Right ventricle myocardium superior (tissue), 1 donor: ENCODE measurements at regions of chr1 and their contacts with region 1.

Region 1: DNA sequence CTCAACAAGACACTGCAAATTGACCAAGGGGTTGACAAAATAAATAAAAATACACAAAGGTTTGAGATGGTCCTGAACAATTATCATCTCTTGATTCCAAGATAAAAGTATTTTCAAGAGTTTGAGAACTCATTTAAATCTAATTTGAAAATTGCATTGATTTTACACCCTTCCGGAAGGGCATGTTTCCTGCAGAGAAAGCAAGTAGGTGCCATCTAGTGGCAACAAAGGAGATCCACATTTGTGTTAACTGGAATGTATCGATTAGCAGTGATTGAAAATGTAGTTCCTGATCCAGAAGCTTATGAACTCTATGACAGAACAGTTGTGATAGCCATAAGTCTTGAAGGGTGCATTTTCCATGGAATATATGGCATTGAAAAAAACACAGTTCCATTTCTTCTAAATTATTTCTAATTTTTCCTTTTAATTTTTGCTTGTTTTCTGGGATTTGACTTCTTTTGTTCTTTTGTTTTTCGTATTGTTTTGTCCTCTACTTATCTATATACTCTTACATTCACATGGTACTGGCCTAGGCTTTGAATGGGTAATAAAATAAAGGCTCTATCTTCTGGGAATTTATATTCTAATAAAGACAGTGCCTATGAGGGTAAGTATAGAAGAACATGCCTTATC is 143.7 kb downstream of the DNM3 start:
- DNase-seq: no peak
- ATAC-seq: peak; percentile 85

Region 2: DNA sequence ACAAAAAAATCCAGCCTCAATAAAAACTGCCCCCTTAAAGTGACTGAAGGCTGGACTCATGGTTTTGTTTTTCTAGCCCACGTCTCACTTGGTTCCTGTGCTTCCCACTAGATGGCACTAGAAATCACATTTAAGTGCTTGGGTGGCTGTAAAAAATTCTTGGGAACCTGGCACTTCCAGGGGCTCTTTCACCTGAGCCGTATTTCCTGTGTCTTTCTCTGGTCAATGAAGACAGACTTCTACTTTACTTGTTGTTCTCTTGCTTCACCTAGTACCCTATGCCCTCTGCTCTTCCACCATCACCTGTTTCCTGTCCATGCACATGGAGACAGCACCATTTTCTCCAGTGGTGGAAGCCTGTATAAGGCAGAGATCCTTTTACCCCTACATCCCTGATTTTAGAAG is 183.5 kb before region 1 on chr1:
- intact Hi-C with region 1: loop called (anchors 1 kb)
- DNase-seq: no peak
- ATAC-seq: peak; percentile 52